Heart right ventricle (tissue), 16 donors: ENCODE measurements at regions of chr16 and their contacts with region 1.

Region 1: DNA sequence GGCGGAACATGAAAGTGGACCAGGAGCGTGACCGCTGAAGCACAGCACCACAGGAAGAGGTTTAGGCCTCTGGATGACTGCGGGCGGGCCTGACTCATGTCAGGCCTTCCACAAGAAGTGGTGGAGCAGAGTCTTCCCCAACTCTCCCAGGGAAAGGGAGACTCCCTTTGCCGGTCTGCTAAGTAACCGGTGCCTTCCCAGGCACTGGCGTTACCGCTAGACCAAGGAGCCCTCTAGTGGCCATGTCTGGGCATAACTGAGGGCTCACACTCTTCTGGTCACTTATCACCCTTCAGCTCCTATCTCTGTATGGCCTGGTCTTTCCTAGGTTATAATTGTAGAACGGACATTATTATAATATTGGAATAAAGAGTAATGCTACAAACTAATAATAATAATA is 1931.9 kb downstream of the TP53TG3F start:
- DNase-seq: peak; percentile 15 to 17
- ATAC-seq: no peak
- H3K4me3 ChIP-seq: no peak overlapping the region
- H3K27ac ChIP-seq: no peak overlapping the region
- H3K4me1 ChIP-seq: no peaks in the 10 kb centered on the region
- H3K27me3 ChIP-seq: peaks cover 0 to 2% (median 0%) of the 10 kb centered on the region in 7 donors
- CTCF ChIP-seq: peak; percentile 29 to 73 (median 56)

Region 2: GRCh38 chr16:35207059-35207999 is 184.0 kb before region 1 on chr16:
- intact Hi-C with region 1: loop called in 1 of 10 experiments (anchors 10 kb)
- DNase-seq: peak in 1 of 2 donors; percentile 11
- ATAC-seq: peak in 3 of 8 donors; percentile 46 to 72 (median 50)
- H3K4me3 ChIP-seq: no peak overlapping the region
- H3K27ac ChIP-seq: no peak overlapping the region
- H3K4me1 ChIP-seq: no peaks in the 10 kb centered on the region
- H3K27me3 ChIP-seq: peaks cover 0 to 19% (median 8%) of the 10 kb centered on the region in 7 donors
- CTCF ChIP-seq: no peak

Region 3: GRCh38 chr16:35449663-35450062 is 58.3 kb after region 1 on chr16:
- intact Hi-C with region 1: loop called in 1 of 10 experiments (anchors 10 kb)
- DNase-seq: no peak
- ATAC-seq: no peak
- H3K4me3 ChIP-seq: no peak overlapping the region
- H3K27ac ChIP-seq: no peak overlapping the region
- H3K4me1 ChIP-seq: no peaks in the 10 kb centered on the region
- H3K27me3 ChIP-seq: no peaks in the 10 kb centered on the region
- CTCF ChIP-seq: no peak